Activated T-helper 1 cell treated with anti-CD3 and anti-CD28 coated beads, Interleukin-12 subunit alpha, Interleukin-12 subunit beta, Interleukin-2, Interleukin-4 antibody, amounts not matched to agents 30 ng/mL and 10 ng/mL and 1 ng/mL, durations not matched to agents 14 hours and 24 hours and 36 hours (primary cell): ENCODE measurements at regions of chr11 and their contacts with region 1.

Region 1: DNA sequence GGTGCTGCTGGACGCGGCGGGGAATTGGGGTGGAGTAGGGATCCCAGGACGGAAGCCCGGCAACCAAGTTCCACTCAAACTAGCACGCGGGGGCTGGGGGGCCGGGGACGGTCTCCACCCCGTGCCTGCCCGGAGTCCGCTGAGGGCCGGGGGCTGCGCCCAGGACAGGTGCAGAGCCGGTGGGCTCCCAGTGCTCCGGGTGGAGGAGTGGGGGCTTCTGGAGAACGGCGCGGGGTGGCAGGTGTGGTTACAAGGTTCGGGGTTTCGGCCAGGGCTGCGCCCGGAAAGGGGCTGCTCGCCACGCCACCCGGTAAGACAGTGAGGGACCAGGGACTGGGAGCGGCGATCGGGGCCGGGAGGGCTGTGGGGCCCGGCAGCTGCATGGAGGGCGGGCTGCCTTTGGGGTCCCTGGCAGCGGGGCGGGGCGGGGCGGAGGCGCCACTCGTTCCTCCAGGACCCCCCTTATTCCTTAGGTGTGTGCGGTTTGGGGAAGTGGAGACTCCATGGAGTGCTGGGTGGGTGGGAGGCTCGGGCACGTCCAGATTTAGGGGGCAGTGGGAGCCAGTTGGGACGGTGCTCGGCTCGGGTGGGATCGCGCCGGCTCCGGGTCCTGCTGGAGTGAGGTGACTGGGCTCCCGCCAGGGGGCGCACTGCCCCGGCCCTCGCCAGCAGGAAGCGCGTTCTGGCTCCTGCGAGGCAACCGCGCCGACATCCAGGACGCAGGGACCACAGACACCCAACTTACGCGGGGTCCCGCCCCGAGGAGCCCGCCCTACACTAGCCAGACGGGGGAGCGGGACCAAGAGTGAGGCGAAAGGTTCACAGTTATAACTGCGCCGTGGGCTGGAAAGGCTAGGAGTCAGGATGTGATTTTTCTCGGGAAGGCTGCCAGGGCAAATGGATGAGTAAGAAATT is 868 bp downstream of the TSPAN18 start:
- DNase-seq: peak; percentile 72
- H3K4me3 Mint-ChIP-seq: peak overlapping the region; percentile 83
- H3K27ac Mint-ChIP-seq: no peak overlapping the region
- H3K4me1 Mint-ChIP-seq: peaks cover 36% of the 10 kb centered on the region
- H3K27me3 Mint-ChIP-seq: peaks cover 17% of the 10 kb centered on the region

Region 2: DNA sequence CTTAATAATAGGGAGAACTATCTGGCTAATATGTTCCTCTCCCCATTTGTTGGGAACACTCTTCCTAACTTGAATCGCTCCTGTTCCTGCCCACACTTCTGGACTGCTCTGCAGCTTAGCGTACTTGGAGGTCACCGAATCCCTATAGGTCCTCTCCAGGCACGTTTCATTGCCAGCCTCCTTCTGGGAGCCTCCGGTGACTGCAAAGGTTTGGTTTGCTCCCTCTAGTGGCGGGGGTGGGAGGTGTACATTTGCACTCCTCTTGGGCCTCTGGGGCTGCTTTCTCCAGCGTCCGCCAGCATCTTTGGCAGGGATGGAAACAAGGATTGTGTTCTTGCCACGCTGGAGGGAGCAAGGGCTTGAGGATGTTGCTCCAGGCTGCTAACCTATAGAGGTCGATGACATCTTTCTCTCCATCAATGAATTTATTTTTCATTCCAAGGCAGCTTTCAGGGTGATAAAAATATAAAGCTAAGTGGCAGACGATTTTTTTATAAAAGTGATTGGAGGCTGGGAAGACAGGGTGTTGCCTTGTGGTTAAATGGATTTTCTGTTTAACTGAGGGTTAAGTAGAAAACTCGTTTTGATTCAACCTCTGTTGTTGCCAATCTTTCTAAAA is 47.8 kb after region 1 on chr11:
- intact Hi-C with region 1: loop called (anchors 1 kb)
- DNase-seq: peak; percentile 4
- H3K4me3 Mint-ChIP-seq: no peak overlapping the region
- H3K27ac Mint-ChIP-seq: no peak overlapping the region
- H3K4me1 Mint-ChIP-seq: no peaks in the 10 kb centered on the region
- H3K27me3 Mint-ChIP-seq: peaks cover 2% of the 10 kb centered on the region

Region 3: GRCh38 chr11:44861849-44862749 is 134.5 kb after region 1 on chr11:
- intact Hi-C with region 1: loop called (anchors 1 kb)
- DNase-seq: peak; percentile 76
- H3K4me3 Mint-ChIP-seq: no peak overlapping the region
- H3K27ac Mint-ChIP-seq: peak overlapping the region; percentile 68
- H3K4me1 Mint-ChIP-seq: peaks cover 21% of the 10 kb centered on the region
- H3K27me3 Mint-ChIP-seq: peaks cover 56% of the 10 kb centered on the region

Region 4: DNA sequence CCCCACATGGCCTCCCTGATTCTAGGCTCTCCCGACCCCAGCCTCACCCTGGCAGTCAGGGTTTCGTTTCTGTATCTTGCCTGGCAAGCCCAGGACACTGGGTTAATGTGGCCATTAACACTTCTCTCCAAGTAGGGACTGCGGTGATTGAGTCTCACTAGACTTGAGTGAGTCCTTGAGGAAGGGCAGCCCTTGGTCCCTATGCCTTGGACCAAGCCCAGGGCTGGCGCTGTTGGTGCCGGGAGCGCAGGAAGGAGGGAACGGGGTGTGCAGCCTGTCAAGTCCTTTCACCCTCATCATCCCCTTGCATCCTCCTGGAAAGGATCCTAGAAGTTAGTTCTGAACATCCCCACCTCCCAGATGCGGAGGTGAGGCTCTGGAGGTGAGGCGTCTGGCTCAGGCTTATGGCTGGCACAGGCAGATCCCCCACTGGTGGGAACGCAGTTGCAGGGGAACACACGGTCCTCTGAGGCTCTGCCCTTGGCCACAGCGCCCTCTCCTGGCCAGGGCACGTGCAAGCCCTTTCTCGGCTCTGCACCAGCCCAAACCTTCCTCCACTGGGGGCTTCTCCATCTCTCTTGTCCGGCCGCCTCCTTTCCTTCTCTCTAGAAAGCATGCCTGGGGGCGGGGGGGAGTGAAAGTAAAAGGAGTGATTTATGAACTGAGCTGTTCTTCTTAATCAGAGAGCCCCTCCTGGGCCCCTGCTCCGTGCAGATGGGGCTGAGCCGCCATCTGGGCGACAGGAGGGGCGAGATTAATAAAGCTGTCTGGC is 166.4 kb after region 1 on chr11:
- intact Hi-C with region 1: loop called (anchors 1 kb)
- DNase-seq: peak; percentile 21
- H3K4me3 Mint-ChIP-seq: no peak overlapping the region
- H3K27ac Mint-ChIP-seq: no peak overlapping the region
- H3K4me1 Mint-ChIP-seq: no peaks in the 10 kb centered on the region
- H3K27me3 Mint-ChIP-seq: no peaks in the 10 kb centered on the region

Region 5: DNA sequence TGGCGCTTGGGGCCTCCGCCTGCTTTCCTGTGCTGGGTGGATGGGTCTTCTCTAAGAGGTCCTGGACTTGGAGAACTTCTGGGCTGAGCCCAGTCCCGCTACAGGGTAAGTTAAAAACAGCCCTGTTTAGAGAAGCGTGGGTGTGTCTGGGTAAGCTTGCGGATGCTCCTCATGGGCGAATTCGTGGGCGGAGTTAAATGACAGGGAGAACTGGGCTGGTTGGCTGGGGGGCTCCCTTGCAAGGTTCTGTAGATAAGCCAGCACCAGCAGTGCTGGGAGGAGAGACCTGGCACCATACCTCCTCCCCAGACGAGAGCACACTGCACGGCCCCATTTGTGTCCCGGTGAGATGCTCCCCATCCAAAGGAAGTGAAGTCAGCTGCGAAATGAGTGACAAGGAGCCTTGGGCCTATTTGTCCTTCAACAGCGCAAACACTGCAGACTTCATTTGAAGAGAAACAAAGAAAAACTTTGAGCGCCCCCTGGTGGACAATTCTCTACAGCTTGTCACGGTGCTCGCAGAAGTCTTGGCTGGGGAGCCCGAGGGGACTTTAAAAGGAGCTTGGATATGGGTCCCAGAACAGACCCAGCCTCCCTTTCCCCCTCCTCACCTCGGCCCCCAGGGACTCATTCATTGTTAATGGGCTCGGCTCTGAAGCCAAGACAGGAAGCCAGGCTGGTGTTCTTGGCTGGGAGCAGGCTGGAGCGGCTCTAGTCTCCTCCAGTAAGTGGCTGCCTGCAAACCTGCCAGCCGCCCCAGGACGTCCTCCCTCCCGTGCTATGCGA is 183.6 kb after region 1 on chr11:
- intact Hi-C with region 1: loop called (anchors 1 kb)
- DNase-seq: peak; percentile 70
- H3K4me3 Mint-ChIP-seq: no peak overlapping the region
- H3K27ac Mint-ChIP-seq: no peak overlapping the region
- H3K4me1 Mint-ChIP-seq: no peaks in the 10 kb centered on the region
- H3K27me3 Mint-ChIP-seq: peaks cover 4% of the 10 kb centered on the region